ENCODE measurements at regions of chr1 and their contacts with region 1.

Region 1: DNA sequence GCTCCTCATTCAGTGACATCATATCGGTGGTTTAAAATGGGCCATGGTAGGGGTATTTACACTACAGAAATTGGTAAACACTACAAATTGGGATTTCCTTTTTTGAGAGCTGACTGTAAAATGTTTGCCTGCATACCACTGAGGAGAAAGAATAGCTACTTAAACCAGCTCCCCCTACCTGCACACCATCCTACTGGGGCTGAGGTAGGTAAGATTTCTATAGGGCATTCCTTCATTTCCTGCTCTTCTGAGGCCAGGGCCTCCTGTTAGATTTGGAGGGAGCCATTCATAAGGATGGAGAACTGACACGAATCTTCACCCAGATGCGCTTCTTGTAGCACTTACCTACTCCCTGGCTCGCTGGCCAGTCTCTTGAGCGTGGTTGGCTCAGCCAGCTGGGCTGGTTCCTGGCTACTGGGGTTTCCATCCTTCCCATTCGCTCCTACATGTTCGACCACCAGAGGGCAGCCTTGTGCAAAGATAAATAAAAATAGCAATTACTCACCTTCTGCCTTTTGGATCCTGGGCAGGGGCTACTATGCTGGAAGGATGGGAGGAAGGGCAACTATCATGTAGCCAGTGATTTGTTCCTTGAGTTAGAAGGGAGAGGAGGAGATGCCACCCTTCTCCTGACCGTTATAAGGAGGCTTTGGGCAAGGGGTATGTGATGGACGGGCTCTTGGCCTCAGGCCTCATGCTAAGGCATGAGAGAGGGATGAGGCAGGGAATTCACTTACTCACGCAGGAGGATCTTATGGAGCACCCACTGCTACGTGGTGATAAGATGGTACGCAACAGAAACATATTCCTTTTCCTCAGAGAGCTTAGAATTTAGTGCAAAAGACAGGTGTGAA is 10.7 kb downstream of the OPTC start:
- DNase-seq: peak; percentile 85
- H3K4me3 Mint-ChIP-seq: no peak overlapping the region
- H3K27ac Mint-ChIP-seq: no peak overlapping the region
- H3K4me1 Mint-ChIP-seq: peaks cover 10% of the 10 kb centered on the region
- H3K27me3 Mint-ChIP-seq: peaks cover 42% of the 10 kb centered on the region
- CTCF ChIP-seq: peak; percentile 88

Region 2: DNA sequence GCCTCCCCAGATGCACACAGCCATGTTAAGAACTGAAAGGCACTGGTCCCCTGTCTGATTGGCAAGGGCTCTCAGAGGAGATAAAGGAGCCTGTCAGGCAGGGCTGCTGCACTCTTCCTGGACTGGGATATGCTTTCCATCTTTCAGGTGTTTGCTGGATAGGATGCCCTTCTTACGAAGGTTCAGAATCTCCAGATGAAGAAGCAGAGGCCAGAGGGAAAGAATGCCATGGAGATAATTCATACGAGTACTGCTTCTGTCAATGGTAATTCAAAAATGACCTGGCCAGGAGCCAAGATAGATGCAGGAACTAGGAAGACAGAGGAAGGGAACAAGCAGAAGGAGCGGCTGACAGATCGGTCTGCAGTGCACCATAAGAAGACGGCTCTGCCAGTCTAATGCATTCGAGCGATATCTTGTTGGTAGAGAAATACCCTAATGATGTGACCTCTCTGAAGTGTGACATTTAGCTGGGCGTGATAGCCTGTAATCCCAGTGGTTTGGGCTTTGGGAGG is 105.4 kb after region 1 on chr1:
- CTCF ChIA-PET with region 1: interaction called, 10 read pairs
- intact Hi-C with region 1: no loop called
- DNase-seq: no peak
- H3K4me3 Mint-ChIP-seq: no peak overlapping the region
- H3K27ac Mint-ChIP-seq: no peak overlapping the region
- H3K4me1 Mint-ChIP-seq: peaks cover 16% of the 10 kb centered on the region
- H3K27me3 Mint-ChIP-seq: peaks cover 11% of the 10 kb centered on the region
- CTCF ChIP-seq: no peak

Region 3: GRCh38 chr1:203625628-203626019 is 121.0 kb after region 1 on chr1:
- CTCF ChIA-PET with region 1: interaction called, 12 read pairs
- intact Hi-C with region 1: loop called (anchors 10 kb)
- DNase-seq: no peak
- H3K4me3 Mint-ChIP-seq: peak overlapping the region; percentile 22
- H3K27ac Mint-ChIP-seq: peak overlapping the region; percentile 54
- H3K4me1 Mint-ChIP-seq: peaks cover 43% of the 10 kb centered on the region
- H3K27me3 Mint-ChIP-seq: peaks cover 54% of the 10 kb centered on the region
- CTCF ChIP-seq: no peak

Region 4: GRCh38 chr1:203702130-203702577 is 197.5 kb after region 1 on chr1:
- CTCF ChIA-PET with region 1: interaction called, 32 read pairs
- intact Hi-C with region 1: loop called (anchors 1 kb)
- DNase-seq: peak; percentile 55
- H3K4me3 Mint-ChIP-seq: no peak overlapping the region
- H3K27ac Mint-ChIP-seq: no peak overlapping the region
- H3K4me1 Mint-ChIP-seq: no peaks in the 10 kb centered on the region
- H3K27me3 Mint-ChIP-seq: peaks cover 15% of the 10 kb centered on the region
- CTCF ChIP-seq: peak; percentile 97